ENCODE measurements at regions of chr3 and their contacts with region 1.

Region 1: GRCh38 chr3:108221911-108222852 is at the start of gene IFT57:
- DNase-seq: peak; percentile 98
- ATAC-seq: peak; percentile 89
- H3K4me3 ChIP-seq: peak within 1 kb of the TSS; percentile 89
- H3K27ac ChIP-seq: no peak within 1 kb of the TSS; the same call in 1 of the 2 replicates
- H3K4me1 ChIP-seq: peaks cover 42% of the 10 kb centered on the region
- H3K27me3 ChIP-seq: no peaks in the 10 kb centered on the region
- CTCF ChIP-seq: no peak
- total RNA-seq, gene IFT57: 46.0 and 54.0 TPM in 2 replicates

Region 2: DNA sequence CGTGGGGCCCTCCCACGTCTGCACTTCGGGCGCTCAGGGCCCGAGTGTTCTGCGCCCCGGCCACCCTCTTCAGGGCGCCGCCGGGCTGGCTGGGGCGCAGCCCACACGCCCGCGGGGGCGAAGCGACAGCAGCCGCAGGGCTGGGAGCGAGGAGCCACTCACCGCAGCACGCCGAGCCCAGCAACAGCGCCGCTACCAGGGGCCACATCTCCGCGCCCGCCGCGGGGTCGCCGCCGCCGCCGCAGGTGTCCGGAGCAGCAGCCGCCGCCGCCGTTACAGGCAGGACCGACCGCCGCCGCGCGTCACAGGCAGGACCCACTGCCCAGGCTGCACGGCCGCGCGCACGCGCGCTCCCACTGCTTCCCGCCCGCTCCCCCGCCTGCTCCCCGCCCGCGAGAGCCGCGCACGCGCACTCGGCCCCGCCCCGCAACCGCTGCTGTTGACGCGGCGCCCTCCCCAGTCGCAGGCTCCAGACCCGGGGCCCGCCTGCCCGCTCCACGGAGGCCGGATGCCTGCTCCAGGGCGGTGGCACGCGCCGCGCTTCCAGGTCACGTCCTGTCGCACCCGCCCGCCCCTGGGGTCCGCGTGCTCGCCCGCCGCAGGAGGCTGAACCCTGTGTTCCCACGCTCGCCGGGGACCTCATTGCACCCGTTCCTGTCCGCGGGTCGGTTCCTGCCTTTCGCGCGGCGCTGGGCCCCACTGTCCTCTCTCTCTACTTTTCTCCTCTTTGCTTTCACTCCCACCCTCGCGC is 131.3 kb before region 1 on chr3 and contains the start of gene CD47:
- CTCF ChIA-PET with region 1: no interaction called
- POLR2A ChIA-PET with region 1: no interaction called
- intact Hi-C with region 1: loop called (anchors 1 kb)
- DNase-seq: peak; percentile 92
- ATAC-seq: peak; percentile 79
- H3K4me3 ChIP-seq: peak within 1 kb of the TSS; percentile 96
- H3K27ac ChIP-seq: peak within 1 kb of the TSS; percentile 17
- H3K4me1 ChIP-seq: peaks cover 15% of the 10 kb centered on the region; the same call in 1 of the 2 replicates
- H3K27me3 ChIP-seq: no peaks in the 10 kb centered on the region
- CTCF ChIP-seq: no peak
- total RNA-seq, gene CD47: 48.4 and 63.6 TPM in 2 replicates

Region 3: GRCh38 chr3:108180194-108180593 is 42.0 kb before region 1 on chr3:
- CTCF ChIA-PET with region 1: no interaction called
- POLR2A ChIA-PET with region 1: interaction called, 4 read pairs
- intact Hi-C with region 1: loop called (anchors 5 kb)
- DNase-seq: peak; percentile 58
- ATAC-seq: peak; percentile 32
- H3K4me3 ChIP-seq: no peak overlapping the region
- H3K27ac ChIP-seq: peak overlapping the region; percentile 19
- H3K4me1 ChIP-seq: peaks cover 36% of the 10 kb centered on the region
- H3K27me3 ChIP-seq: no peaks in the 10 kb centered on the region
- CTCF ChIP-seq: no peak

Region 4: DNA sequence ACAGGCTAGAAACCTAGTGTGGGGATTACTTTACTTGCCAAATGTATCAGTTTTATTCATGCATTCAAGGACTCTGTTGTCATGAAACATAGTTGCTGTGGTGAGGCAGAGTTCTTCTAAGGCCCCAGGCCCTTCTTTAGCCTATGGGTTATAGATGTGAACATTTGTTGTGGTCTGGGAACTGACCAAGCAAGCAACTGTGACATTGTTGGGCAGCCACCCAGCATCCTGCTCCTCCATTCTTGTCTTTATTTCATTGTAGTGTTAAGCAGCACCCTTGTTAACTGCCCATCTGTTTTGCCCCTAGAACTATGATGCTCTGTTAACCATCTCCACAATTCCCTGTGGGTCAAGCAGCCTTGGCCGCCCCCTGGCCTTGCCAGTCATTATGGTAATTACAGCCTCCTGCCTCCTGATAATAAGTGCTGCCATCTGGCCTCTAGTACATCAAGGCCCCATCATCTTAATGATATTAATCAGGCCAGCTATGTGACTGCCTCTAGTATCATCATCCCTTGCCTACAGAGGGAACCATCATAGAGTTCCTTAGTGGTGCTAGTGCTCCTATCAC is 12.3 kb after region 1 on chr3:
- CTCF ChIA-PET with region 1: no interaction called
- POLR2A ChIA-PET with region 1: no interaction called
- intact Hi-C with region 1: no loop called
- DNase-seq: no peak
- ATAC-seq: no peak
- H3K4me3 ChIP-seq: no peak overlapping the region
- H3K27ac ChIP-seq: no peak overlapping the region
- H3K4me1 ChIP-seq: no peaks in the 10 kb centered on the region
- H3K27me3 ChIP-seq: no peaks in the 10 kb centered on the region
- CTCF ChIP-seq: no peak

Region 5: DNA sequence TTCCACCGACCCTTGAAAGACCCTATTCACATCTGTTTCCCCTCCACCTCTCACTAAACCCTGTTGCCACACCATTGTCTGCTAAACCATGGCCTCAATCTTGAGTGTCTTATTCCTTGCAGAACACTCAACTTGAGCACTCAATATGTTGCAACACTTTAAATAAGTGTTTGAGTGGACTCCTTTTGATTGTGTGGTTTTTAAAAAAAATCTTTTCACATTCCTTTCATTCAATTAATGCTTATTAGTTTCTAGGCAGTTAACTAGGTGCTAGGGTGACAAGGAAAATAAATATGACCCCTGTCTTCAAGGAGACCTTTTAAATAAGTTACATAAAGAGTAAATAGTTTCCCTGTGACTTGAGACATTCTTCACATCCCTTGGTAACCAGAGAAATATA is 60.8 kb after region 1 on chr3:
- CTCF ChIA-PET with region 1: no interaction called
- POLR2A ChIA-PET with region 1: no interaction called
- intact Hi-C with region 1: no loop called
- DNase-seq: no peak
- ATAC-seq: no peak
- H3K4me3 ChIP-seq: no peak overlapping the region
- H3K27ac ChIP-seq: no peak overlapping the region
- H3K4me1 ChIP-seq: no peaks in the 10 kb centered on the region
- H3K27me3 ChIP-seq: no peaks in the 10 kb centered on the region
- CTCF ChIP-seq: no peak

Region 6: DNA sequence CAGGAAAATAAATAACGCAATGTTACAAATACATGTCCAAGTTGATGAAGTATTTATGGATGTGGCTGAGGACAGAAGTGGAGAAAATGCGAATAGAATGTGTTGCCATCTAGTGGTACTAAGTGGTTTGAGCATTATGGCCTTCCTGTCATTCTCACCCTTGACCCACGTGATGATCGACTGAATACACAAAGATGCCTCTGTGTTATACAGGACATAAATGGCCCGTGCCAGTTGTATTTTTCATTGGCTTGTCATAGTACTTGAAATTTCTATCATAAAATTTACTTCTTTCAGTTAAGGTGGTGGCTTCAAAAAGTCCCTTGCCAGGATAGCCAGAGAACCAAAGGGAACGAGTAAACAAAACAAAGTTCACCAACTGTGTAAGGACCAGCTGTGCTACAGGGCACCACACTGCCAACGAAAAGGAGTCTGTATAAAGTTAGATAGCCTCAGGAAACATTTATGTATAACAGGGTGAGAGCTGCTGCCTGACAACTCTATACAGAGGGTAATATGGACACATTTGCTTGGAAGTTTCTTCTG is 184.6 kb after region 1 on chr3:
- CTCF ChIA-PET with region 1: no interaction called
- POLR2A ChIA-PET with region 1: no interaction called
- intact Hi-C with region 1: loop called (anchors 1 kb)
- DNase-seq: peak; percentile 74
- ATAC-seq: peak; percentile 89
- H3K4me3 ChIP-seq: no peak overlapping the region
- H3K27ac ChIP-seq: no peak overlapping the region
- H3K4me1 ChIP-seq: peaks cover 9% of the 10 kb centered on the region
- H3K27me3 ChIP-seq: no peaks in the 10 kb centered on the region
- CTCF ChIP-seq: peak; percentile 80

Region 7: GRCh38 chr3:108552267-108553159 is 330.3 kb after region 1 on chr3:
- CTCF ChIA-PET with region 1: no interaction called
- POLR2A ChIA-PET with region 1: no interaction called
- intact Hi-C with region 1: loop called (anchors 2 kb)
- DNase-seq: peak; percentile 76
- ATAC-seq: no peak
- H3K4me3 ChIP-seq: no peak overlapping the region
- H3K27ac ChIP-seq: no peak overlapping the region
- H3K4me1 ChIP-seq: peaks cover 38% of the 10 kb centered on the region
- H3K27me3 ChIP-seq: no peaks in the 10 kb centered on the region
- CTCF ChIP-seq: peak; percentile 77

Measured in PC-3 (cell line).